CD4-positive, alpha-beta T cell (primary cell): ENCODE measurements at regions of chr1 and their contacts with region 1.

Region 1: DNA sequence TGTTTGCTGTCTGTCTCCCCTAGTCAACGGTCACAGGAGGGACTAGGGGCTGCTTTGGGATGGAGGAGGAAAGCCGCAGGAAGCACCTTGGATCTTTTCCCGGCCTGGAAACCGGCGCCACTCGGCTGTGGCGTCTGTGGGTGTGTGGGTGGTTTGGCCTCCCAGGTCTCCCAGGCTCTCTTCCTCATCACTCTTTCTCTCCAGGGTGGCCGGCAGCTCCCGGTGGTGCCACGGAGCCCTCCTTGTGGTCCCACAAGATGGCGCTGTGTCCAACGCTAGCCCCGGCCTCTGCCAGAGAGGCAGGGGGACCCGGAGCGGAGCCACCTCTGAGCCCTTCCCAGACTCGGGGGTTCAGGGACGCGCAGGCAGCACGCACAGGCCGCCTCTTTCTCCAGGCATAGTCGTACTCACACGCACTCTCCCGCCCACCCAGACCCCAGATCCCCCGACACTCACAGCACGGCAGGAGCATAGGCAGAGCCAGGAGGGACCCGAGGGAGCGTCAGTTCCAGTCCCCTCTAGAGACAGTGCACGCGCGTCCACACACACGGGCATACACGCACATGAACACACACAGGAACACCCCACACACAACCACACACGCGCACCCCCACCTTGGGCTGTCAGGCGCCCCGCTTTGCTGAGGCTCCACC is 31.2 kb downstream of the CDCP2 start:
- DNase-seq: peak; percentile 51 to 79 (median 60)
- ATAC-seq: peak; percentile 85
- H3K4me3 ChIP-seq: peak overlapping the region; percentile 4
- H3K4me3 Mint-ChIP-seq: no peak overlapping the region
- H3K27ac ChIP-seq: no peak overlapping the region
- H3K27ac Mint-ChIP-seq: no peak overlapping the region
- H3K4me1 ChIP-seq: peaks cover 9% of the 10 kb centered on the region
- H3K4me1 Mint-ChIP-seq: no peaks in the 10 kb centered on the region
- H3K27me3 ChIP-seq: no peaks in the 10 kb centered on the region
- H3K27me3 Mint-ChIP-seq: peaks cover 3% of the 10 kb centered on the region
- CTCF ChIP-seq: peak; percentile 59

Region 2: DNA sequence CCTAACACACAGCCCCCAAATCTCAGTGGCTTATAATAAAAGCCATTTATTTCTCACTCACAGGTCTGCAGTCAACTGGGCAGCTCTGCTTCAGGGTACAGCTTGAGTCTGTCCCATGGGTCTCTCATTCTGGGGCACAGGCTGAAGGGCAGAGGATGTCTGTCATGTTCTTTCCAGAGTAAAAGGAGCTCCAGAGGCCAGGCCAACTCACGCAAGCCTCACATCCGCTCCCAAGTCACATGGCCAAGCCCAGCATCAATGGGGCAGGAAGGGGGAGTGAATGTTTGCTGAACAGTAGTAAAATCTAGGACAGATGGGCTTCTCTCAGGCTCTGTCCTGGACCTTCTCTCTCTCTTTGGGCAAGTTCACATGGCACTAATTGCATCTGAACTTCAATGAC is 291.7 kb after region 1 on chr1:
- CTCF ChIA-PET with region 1: no interaction called
- POLR2A ChIA-PET with region 1: no interaction called
- intact Hi-C with region 1: loop called in 1 of 2 experiments (anchors 5 kb)
- DNase-seq: peak in 6 of 14 experiments; percentile 8 to 58 (median 53)
- ATAC-seq: peak; percentile 79
- H3K4me3 ChIP-seq: no peak overlapping the region
- H3K4me3 Mint-ChIP-seq: peak overlapping the region; percentile 66
- H3K27ac ChIP-seq: no peak overlapping the region
- H3K27ac Mint-ChIP-seq: peak overlapping the region; percentile 39
- H3K4me1 ChIP-seq: peaks cover 36% of the 10 kb centered on the region
- H3K4me1 Mint-ChIP-seq: peaks cover 43% of the 10 kb centered on the region
- H3K27me3 ChIP-seq: no peaks in the 10 kb centered on the region
- H3K27me3 Mint-ChIP-seq: no peaks in the 10 kb centered on the region
- CTCF ChIP-seq: no peak